ENCODE measurements at regions of chr4 and their contacts with region 1.

Region 1: DNA sequence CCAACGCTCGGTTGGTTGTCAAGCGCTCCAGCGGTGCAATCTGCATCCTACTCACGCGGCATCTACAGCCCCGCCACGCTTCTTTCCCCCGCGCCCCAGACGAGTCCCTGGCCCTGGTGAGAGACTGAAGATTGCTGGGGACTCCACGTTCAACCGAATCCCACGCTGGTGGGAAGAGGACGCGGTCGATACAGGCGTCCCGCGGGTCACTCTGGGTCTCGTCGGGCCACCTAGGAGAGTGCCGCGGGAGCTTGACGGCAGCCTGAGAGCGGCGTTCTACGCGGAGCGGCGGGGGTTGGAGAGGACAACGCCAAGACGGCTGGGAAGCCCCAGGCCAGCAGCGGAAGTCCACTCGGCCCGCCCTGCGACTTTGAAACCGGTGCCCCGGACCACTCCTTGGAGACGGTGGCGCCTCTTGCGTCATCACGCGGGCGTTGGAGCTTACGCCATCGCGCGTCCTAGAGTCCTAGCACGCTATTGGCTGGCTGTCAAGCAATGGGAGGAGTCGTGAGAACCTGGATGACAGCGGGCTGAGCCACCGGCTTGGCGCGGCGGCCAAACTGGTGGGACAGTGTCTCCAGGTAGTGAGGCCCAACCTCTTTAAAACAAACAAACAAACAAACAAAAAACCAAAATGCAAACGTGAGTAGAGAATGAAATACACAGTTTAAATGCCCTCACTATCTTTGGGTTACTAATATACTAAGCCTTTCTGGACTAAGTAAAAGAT is at the start of gene SCLT1:
- DNase-seq: peak; percentile 98
- H3K4me3 Mint-ChIP-seq: peak within 1 kb of the TSS; percentile 55
- H3K27ac Mint-ChIP-seq: no peak within 1 kb of the TSS
- H3K4me1 Mint-ChIP-seq: peaks cover 31% of the 10 kb centered on the region
- H3K27me3 Mint-ChIP-seq: no peaks in the 10 kb centered on the region
- total RNA-seq, gene SCLT1: 20.3 to 21.1 TPM

Region 2: GRCh38 chr4:127782274-127783025 is 1310.9 kb before region 1 on chr4 and contains the start of gene HSPA4L:
- CTCF ChIA-PET with region 1: no interaction called
- intact Hi-C with region 1: loop called (anchors 5 kb)
- DNase-seq: peak; percentile 78
- H3K4me3 Mint-ChIP-seq: peak within 1 kb of the TSS; percentile 86
- H3K27ac Mint-ChIP-seq: peak within 1 kb of the TSS; percentile 80
- H3K4me1 Mint-ChIP-seq: peaks cover 17% of the 10 kb centered on the region
- H3K27me3 Mint-ChIP-seq: peaks cover 56% of the 10 kb centered on the region
- total RNA-seq, gene HSPA4L: 2.6 to 2.8 TPM

Region 3: GRCh38 chr4:127965062-127965802 is 1128.1 kb before region 1 on chr4 and contains the starts of genes ABHD18 and MFSD8:
- CTCF ChIA-PET with region 1: no interaction called
- intact Hi-C with region 1: loop called (anchors 1 kb)
- DNase-seq: peak; percentile 99
- H3K4me3 Mint-ChIP-seq: peak within 1 kb of the TSS; percentile 93
- H3K27ac Mint-ChIP-seq: peak within 1 kb of the TSS; percentile 96
- H3K4me1 Mint-ChIP-seq: peaks cover 32% of the 10 kb centered on the region
- H3K27me3 Mint-ChIP-seq: no peaks in the 10 kb centered on the region
- total RNA-seq, gene ABHD18: 17.0 to 17.5 TPM
- total RNA-seq, gene MFSD8: 11.1 to 11.2 TPM

Region 4: DNA sequence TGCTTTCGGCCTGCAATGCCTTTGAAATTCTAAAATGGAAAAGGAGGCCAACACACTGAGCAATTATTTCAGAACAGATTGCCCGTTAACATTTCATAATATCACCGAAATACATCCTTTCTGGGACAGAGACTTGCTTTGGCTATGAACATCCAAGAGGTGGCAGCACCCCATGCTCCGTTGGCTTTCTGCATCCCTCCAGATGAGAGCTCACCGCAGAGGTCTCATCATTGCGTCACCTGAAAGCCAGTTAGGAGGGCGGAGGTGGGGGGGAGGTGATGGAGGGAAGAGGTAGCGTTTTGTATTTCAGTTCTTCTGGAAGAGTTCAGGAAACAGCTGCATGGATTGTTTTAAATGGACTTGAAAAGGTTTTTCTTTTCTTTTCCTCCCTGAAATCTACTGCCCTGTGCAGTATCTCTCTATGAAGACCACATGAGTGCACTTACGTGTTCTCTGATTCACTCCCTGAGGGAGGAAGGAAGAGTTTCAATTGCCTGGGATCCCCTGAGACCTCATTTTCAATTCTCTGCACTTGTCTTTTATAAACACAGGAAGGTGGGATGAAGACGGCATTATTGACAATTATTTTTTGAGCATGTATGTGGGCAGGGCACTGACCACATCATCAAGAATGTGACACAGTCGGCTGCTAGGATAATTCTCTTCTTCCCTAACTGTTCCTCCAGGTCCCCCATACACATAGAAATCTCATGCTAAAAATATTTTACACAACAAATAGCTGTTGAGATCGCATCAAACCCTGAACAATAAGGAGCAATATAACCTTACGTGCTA is 638.9 kb before region 1 on chr4:
- CTCF ChIA-PET with region 1: no interaction called
- intact Hi-C with region 1: loop called (anchors 10 kb)
- DNase-seq: peak; percentile 84
- H3K4me3 Mint-ChIP-seq: peak overlapping the region; percentile 21
- H3K27ac Mint-ChIP-seq: no peak overlapping the region
- H3K4me1 Mint-ChIP-seq: peaks cover 8% of the 10 kb centered on the region
- H3K27me3 Mint-ChIP-seq: no peaks in the 10 kb centered on the region

Region 5: GRCh38 chr4:128574706-128575105 is 518.6 kb before region 1 on chr4:
- CTCF ChIA-PET with region 1: no interaction called
- intact Hi-C with region 1: no loop called
- DNase-seq: peak; percentile 91
- H3K4me3 Mint-ChIP-seq: no peak overlapping the region
- H3K27ac Mint-ChIP-seq: no peak overlapping the region
- H3K4me1 Mint-ChIP-seq: no peaks in the 10 kb centered on the region
- H3K27me3 Mint-ChIP-seq: peaks cover 6% of the 10 kb centered on the region

Region 6: DNA sequence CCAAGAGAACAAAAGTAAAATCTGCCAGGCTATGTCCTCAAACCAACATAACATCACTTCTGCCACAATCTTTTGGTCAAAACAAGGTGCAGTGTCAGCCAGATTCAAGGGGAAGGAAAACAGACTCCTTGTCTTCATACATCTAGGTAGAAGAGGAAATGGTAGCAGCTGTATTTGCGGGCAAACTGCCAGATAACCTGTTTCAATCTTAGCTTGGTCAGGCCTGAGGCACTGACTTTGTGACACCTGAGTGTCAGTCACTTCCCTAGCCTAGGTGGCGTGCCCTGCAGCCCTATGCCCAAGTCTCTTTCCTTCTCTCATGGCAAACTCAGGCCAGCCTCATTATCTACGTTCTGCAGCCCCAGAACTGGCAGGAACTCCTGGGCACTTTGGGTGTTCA is 430.0 kb before region 1 on chr4:
- CTCF ChIA-PET with region 1: no interaction called
- intact Hi-C with region 1: loop called (anchors 10 kb)
- DNase-seq: peak; percentile 56
- H3K4me3 Mint-ChIP-seq: no peak overlapping the region
- H3K27ac Mint-ChIP-seq: no peak overlapping the region
- H3K4me1 Mint-ChIP-seq: peaks cover 10% of the 10 kb centered on the region
- H3K27me3 Mint-ChIP-seq: no peaks in the 10 kb centered on the region

Region 7: GRCh38 chr4:129046055-129046959 is 47.0 kb before region 1 on chr4:
- CTCF ChIA-PET with region 1: no interaction called
- intact Hi-C with region 1: loop called (anchors 2 kb)
- DNase-seq: no peak
- H3K4me3 Mint-ChIP-seq: no peak overlapping the region
- H3K27ac Mint-ChIP-seq: no peak overlapping the region
- H3K4me1 Mint-ChIP-seq: peaks cover 5% of the 10 kb centered on the region
- H3K27me3 Mint-ChIP-seq: no peaks in the 10 kb centered on the region

Measured in activated naive CD4-positive, alpha-beta T cell treated with anti-CD3 and anti-CD28 coated beads for 36 hours (primary cell).